PC-3 (cell line): ENCODE measurements at regions of chr18 and their contacts with region 1.

Region 1: DNA sequence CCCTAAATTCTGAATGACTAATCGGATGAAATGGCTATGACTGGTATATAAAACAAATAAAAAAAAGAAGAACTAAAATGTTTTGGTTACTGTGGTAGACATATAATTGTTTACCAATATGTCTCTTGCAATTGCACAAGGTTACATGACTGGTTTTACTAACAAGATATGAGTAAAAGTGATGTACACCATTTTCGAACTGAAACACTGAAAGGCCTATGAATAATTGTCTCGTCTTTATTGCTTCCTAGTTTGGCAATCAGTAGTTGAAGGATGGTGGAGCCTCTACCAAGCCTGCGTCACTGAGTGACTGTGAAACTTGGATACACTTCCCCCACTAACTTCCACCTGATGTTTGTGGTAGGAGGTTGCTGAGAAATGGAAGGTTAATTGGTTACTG is 16.5 kb downstream of the CDH19 start:
- DNase-seq: peak; percentile 93
- ATAC-seq: peak; percentile 89
- H3K4me3 ChIP-seq: no peak overlapping the region
- H3K27ac ChIP-seq: peak overlapping the region; percentile 92
- H3K4me1 ChIP-seq: peaks cover 31% of the 10 kb centered on the region
- H3K27me3 ChIP-seq: no peaks in the 10 kb centered on the region
- CTCF ChIP-seq: no peak

Region 2: GRCh38 chr18:66523219-66523991 is 64.0 kb before region 1 on chr18:
- CTCF ChIA-PET with region 1: no interaction called
- POLR2A ChIA-PET with region 1: no interaction called
- intact Hi-C with region 1: no loop called
- DNase-seq: peak; percentile 8
- ATAC-seq: peak; percentile 24; the same call in 1 of the 2 replicates
- H3K4me3 ChIP-seq: no peak overlapping the region
- H3K27ac ChIP-seq: no peak overlapping the region
- H3K4me1 ChIP-seq: no peaks in the 10 kb centered on the region
- H3K27me3 ChIP-seq: no peaks in the 10 kb centered on the region
- CTCF ChIP-seq: no peak

Region 3: GRCh38 chr18:66599190-66599589 is 11.8 kb after region 1 on chr18:
- CTCF ChIA-PET with region 1: no interaction called
- POLR2A ChIA-PET with region 1: no interaction called
- intact Hi-C with region 1: loop called (anchors 1 kb)
- DNase-seq: peak; percentile 60
- ATAC-seq: peak; percentile 100
- H3K4me3 ChIP-seq: no peak overlapping the region
- H3K27ac ChIP-seq: no peak overlapping the region; the same call in 1 of the 2 replicates
- H3K4me1 ChIP-seq: peaks cover 6% of the 10 kb centered on the region; the same call in 1 of the 2 replicates
- H3K27me3 ChIP-seq: no peaks in the 10 kb centered on the region
- CTCF ChIP-seq: no peak

Region 4: DNA sequence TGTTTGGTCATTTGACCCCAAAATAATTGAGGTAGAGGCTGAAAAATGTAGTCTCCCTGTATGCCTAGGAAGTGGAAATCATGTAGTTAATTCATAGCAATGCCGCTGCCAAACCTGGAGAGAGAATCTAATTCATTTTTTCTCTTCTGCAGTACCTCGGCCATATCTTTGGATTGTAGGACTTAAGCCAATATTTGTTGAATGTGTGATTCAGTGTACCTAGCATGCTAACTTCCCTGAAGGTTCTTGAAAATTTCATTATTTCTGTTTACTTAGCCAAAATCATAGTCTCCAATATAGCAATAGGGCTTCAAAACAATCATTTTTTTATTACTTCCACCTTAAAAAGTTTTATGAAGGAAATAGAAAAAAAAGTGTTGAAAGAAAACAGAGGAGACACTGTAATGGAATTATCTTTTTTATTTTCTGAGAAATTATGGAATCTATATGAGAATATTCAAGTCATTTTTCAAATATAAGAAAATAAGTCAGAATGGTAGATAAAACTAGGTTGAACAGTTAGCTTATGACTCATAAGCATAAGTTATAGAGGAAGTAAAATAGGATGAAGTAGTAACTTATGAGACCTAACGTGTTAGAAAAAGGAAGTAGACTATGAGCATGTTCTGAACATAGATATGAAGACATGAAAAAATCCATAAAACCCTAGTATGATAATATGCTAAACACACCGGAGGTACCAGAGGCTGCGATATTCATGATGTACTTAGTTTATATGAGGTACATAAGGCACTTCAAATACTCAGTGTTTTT is 51.6 kb after region 1 on chr18:
- CTCF ChIA-PET with region 1: no interaction called
- POLR2A ChIA-PET with region 1: no interaction called
- intact Hi-C with region 1: loop called (anchors 1 kb)
- DNase-seq: peak; percentile 37
- ATAC-seq: peak; percentile 83
- H3K4me3 ChIP-seq: no peak overlapping the region
- H3K27ac ChIP-seq: 0 out of 2 replicates have a peak overlapping the region, but pooled peaks have one; percentile 8
- H3K4me1 ChIP-seq: peaks cover 17% of the 10 kb centered on the region; the same call in 1 of the 2 replicates
- H3K27me3 ChIP-seq: no peaks in the 10 kb centered on the region
- CTCF ChIP-seq: no peak

Region 5: GRCh38 chr18:66668706-66669105 is 81.3 kb after region 1 on chr18:
- CTCF ChIA-PET with region 1: no interaction called
- POLR2A ChIA-PET with region 1: no interaction called
- intact Hi-C with region 1: no loop called
- DNase-seq: no peak
- ATAC-seq: no peak
- H3K4me3 ChIP-seq: no peak overlapping the region
- H3K27ac ChIP-seq: no peak overlapping the region
- H3K4me1 ChIP-seq: no peaks in the 10 kb centered on the region
- H3K27me3 ChIP-seq: no peaks in the 10 kb centered on the region
- CTCF ChIP-seq: no peak

Region 6: DNA sequence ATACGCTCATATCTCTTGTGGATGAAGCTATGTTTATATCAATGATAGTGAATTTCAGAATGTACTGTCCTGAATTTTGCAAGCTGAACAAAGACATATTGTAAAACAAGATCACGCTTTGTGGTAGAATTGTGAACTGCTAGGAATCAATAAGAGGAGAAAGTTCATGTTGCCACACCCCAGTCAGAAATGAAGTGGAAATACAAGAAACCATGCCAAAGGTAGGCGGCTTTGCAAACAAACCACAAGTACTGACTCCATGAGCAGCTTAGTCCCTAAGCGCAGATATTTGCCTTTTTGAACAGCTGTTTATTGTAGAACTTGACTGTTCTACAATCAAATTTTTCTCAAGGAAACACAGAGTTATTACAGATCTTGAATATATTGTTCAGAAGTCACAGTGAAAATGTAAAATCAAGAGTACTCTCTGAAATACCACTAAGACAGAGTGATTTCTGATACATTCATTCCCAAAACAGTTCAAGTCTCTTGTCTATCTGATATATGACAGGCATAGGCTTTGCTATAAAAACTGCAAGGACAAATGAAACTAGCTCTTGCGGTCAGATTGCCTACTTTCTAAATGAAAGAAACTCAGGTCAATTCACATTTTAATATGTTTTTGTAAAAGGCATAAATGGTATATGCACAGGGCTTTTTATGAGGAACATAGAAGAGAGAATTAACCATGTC is 137.4 kb after region 1 on chr18:
- CTCF ChIA-PET with region 1: no interaction called
- POLR2A ChIA-PET with region 1: no interaction called
- intact Hi-C with region 1: loop called (anchors 5 kb)
- DNase-seq: peak; percentile 86
- ATAC-seq: peak; percentile 95
- H3K4me3 ChIP-seq: no peak overlapping the region
- H3K27ac ChIP-seq: peak overlapping the region; percentile 28
- H3K4me1 ChIP-seq: peaks cover 18% of the 10 kb centered on the region
- H3K27me3 ChIP-seq: no peaks in the 10 kb centered on the region
- CTCF ChIP-seq: no peak